ENCODE measurements at regions of chr16 and their contacts with region 1.

Region 1: GRCh38 chr16:85162478-85163277 is 50.4 kb upstream of the CIBAR2 start:
- DNase-seq: no peak
- ATAC-seq: peak; percentile 7; the same call in 2 of the 3 replicates
- H3K4me3 ChIP-seq: peak overlapping the region; percentile 21 to 62 (median 35); a peak in 5 of 6 replicates
- H3K27ac ChIP-seq: peak overlapping the region; percentile 41
- H3K4me1 ChIP-seq: peaks cover 86% of the 10 kb centered on the region
- H3K27me3 ChIP-seq: peaks cover 0 to 12% of the 10 kb centered on the region in 2 experiments; a peak in 1 of 5 replicates
- CTCF ChIP-seq: peak; percentile 38
- EP300 ChIP-seq: no peak
- POLR2A ChIP-seq: no peak
- RAD21 ChIP-seq: no peak

Region 2: DNA sequence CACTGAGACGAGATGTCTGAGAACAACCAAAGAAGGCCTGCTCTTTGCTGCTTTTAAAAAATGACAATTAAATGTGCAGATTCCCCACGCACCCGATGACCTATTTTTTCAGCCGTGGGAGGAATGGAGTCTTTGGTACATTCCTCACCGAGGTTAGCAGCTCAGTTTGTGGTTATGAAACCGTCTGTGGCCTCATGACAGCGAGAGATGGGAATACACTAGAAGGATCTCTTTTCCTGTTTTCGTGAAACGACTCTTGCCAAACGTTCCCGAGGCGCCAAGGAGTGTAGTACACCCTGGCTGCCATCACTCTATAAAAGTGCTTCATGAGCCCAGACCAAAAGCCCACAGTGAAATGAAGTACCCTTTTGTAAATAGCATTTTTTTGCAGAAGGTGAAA is 255.1 kb before region 1 on chr16:
- CTCF ChIA-PET with region 1: no interaction called
- POLR2A ChIA-PET with region 1: no interaction called
- in situ Hi-C with region 1: no loop called
- intact Hi-C with region 1: no loop called
- DNase-seq: no peak
- ATAC-seq: no peak
- H3K4me3 ChIP-seq: no peak overlapping the region
- H3K27ac ChIP-seq: no peak overlapping the region
- H3K4me1 ChIP-seq: peaks cover 9% of the 10 kb centered on the region
- H3K27me3 ChIP-seq: peaks cover 2 to 40% of the 10 kb centered on the region in 2 experiments; a peak in 4 of 5 replicates
- CTCF ChIP-seq: no peak
- EP300 ChIP-seq: no peak
- POLR2A ChIP-seq: no peak
- RAD21 ChIP-seq: no peak

Region 3: DNA sequence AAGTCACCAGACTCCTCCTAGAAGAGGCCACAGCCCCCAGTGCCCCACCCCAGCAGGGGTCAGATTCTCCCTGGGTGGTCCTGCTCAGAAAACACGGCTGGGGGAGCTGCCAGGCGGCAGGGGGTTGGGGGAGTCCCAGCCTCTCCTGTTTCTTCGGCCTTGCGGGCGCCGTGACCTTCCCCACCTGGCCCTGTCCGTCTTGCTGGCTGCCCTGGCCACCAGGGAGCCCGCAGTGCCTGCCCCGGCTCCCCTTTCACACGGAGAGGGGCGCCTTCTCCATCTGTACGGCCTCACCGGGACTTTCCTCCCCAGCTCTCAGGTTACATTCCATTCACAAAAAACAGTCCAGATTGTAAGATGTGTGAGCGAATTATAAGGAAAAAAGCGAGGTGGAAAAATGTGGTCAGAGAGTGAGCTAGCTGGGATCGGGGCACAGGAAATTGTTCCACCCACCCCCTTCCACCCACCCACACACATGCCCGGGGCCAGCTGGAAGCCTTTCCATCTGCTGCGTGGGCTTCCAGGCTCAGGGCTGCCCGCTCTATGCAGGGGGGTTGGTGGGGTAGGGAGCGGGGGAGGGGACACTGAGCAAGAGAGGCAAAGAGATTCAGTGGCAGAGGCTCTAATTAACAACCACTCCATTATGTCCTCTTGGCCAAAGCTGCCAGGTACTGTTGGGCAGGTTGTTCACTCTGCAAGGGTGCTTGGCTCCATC is 35.8 kb before region 1 on chr16:
- CTCF ChIA-PET with region 1: no interaction called
- POLR2A ChIA-PET with region 1: interaction called, 12 read pairs
- in situ Hi-C with region 1: no loop called
- intact Hi-C with region 1: no loop called
- DNase-seq: no peak
- ATAC-seq: peak; percentile 44
- H3K4me3 ChIP-seq: peak overlapping the region in 1 of 3 experiments; percentile 47; a peak in 1 of 6 replicates
- H3K27ac ChIP-seq: no peak overlapping the region
- H3K4me1 ChIP-seq: peaks cover 33% of the 10 kb centered on the region
- H3K27me3 ChIP-seq: peaks cover 13 to 52% of the 10 kb centered on the region in 2 experiments; a peak in 4 of 5 replicates
- CTCF ChIP-seq: peak; percentile 18; the same call in 1 of the 2 replicates
- EP300 ChIP-seq: no peak
- POLR2A ChIP-seq: no peak
- RAD21 ChIP-seq: no peak

Region 4: DNA sequence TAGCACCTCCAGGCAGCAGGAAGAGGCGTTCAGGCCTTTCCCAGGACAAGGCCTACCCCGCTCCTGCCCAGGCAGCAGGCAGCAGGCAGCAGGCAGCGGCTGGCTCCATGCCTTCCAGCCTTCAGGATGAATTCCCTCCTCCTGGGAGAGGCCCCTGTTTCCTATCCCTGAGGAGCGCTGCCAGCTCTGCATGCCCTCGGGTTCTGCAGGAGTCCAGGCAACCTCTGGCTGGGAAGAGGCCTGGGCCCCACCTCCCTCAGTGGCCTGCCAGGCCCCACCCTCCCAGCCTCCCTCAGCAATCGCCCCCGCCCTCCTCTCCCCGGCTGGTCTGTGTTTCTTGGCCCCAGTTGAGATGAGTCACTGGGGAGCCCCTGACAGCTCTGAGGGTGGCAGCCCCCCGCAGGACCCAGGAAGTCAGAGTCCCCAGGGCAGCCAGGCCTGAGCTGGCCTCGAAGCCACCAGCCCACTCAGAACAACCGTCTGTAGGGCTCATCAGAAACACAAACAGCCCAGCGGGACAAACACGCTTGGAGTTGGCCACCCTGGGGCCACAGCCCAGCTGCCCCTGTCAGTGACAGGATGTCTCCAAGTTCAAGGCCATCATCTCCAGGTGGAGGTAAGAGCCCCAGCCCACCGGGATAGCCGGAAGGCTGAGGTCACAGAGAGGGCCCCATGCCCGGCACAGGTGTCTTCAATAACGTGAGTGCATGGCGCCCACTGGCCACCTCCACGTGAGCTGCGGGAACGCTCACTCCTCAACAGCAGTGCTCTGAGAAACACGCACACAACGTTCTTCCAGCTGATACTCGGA is 10.9 kb before region 1 on chr16:
- CTCF ChIA-PET with region 1: no interaction called
- POLR2A ChIA-PET with region 1: interaction called, 20 read pairs
- in situ Hi-C with region 1: no loop called
- intact Hi-C with region 1: no loop called
- DNase-seq: no peak
- ATAC-seq: peak; percentile 70
- H3K4me3 ChIP-seq: peak overlapping the region in 1 of 3 experiments; percentile 56; a peak in 2 of 6 replicates
- H3K27ac ChIP-seq: no peak overlapping the region
- H3K4me1 ChIP-seq: peaks cover 68% of the 10 kb centered on the region
- H3K27me3 ChIP-seq: peaks cover 4 to 23% of the 10 kb centered on the region in 2 experiments
- CTCF ChIP-seq: peak; percentile 38
- EP300 ChIP-seq: no peak
- POLR2A ChIP-seq: no peak
- RAD21 ChIP-seq: no peak

Region 5: GRCh38 chr16:85199069-85199725 is 36.5 kb after region 1 on chr16:
- CTCF ChIA-PET with region 1: no interaction called
- POLR2A ChIA-PET with region 1: interaction called, 14 read pairs
- in situ Hi-C with region 1: no loop called
- intact Hi-C with region 1: no loop called
- DNase-seq: no peak
- ATAC-seq: no peak
- H3K4me3 ChIP-seq: no peak overlapping the region
- H3K27ac ChIP-seq: no peak overlapping the region
- H3K4me1 ChIP-seq: peaks cover 100% of the 10 kb centered on the region
- H3K27me3 ChIP-seq: no peaks in the 10 kb centered on the region; a peak in 1 of 5 replicates
- CTCF ChIP-seq: no peak
- EP300 ChIP-seq: no peak
- POLR2A ChIP-seq: no peak
- RAD21 ChIP-seq: no peak

Region 6: GRCh38 chr16:85262558-85263238 is 100.0 kb after region 1 on chr16:
- CTCF ChIA-PET with region 1: no interaction called
- POLR2A ChIA-PET with region 1: no interaction called
- in situ Hi-C with region 1: no loop called
- intact Hi-C with region 1: no loop called
- DNase-seq: no peak
- ATAC-seq: no peak
- H3K4me3 ChIP-seq: no peak overlapping the region
- H3K27ac ChIP-seq: no peak overlapping the region
- H3K4me1 ChIP-seq: no peaks in the 10 kb centered on the region
- H3K27me3 ChIP-seq: peaks cover 0 to 1% of the 10 kb centered on the region in 2 experiments; a peak in 1 of 5 replicates
- CTCF ChIP-seq: no peak
- EP300 ChIP-seq: no peak
- POLR2A ChIP-seq: no peak
- RAD21 ChIP-seq: no peak